ENCODE measurements at regions of chr21 and their contacts with region 1.

Region 1: GRCh38 chr21:33403779-33404585 is 769 bp downstream of the IFNGR2 start:
- DNase-seq: peak; percentile 41 to 50 (median 48)
- H3K4me3 ChIP-seq: peak overlapping the region; percentile 83 to 100 (median 99)
- H3K4me3 Mint-ChIP-seq: peak overlapping the region; percentile 99 to 100
- H3K27ac ChIP-seq: peak overlapping the region; percentile 98 to 100
- H3K27ac Mint-ChIP-seq: peak overlapping the region; percentile 98 to 100 (median 99)
- H3K4me1 ChIP-seq: peaks cover 81 to 83% of the 10 kb centered on the region in 2 donors
- H3K4me1 Mint-ChIP-seq: peaks cover 66% of the 10 kb centered on the region
- H3K27me3 ChIP-seq: no peaks in the 10 kb centered on the region
- H3K27me3 Mint-ChIP-seq: no peaks in the 10 kb centered on the region
- CTCF ChIP-seq: no peak

Region 2: GRCh38 chr21:33383056-33383888 is 20.7 kb before region 1 on chr21:
- intact Hi-C with region 1: loop called (anchors 1 to 2 kb)
- DNase-seq: peak; percentile 98 to 100 (median 98)
- H3K4me3 ChIP-seq: peak overlapping the region in 2 of 3 experiments; percentile 29 to 59
- H3K4me3 Mint-ChIP-seq: peak overlapping the region; percentile 71 to 91
- H3K27ac ChIP-seq: peak overlapping the region; percentile 97 to 100
- H3K27ac Mint-ChIP-seq: peak overlapping the region; percentile 98 to 100 (median 100)
- H3K4me1 ChIP-seq: peaks cover 94 to 100% of the 10 kb centered on the region in 2 donors
- H3K4me1 Mint-ChIP-seq: peaks cover 90% of the 10 kb centered on the region
- H3K27me3 ChIP-seq: no peaks in the 10 kb centered on the region
- H3K27me3 Mint-ChIP-seq: no peaks in the 10 kb centered on the region
- CTCF ChIP-seq: no peak